ENCODE measurements at regions of chr5 and their contacts with region 1.

Region 1: GRCh38 chr5:10627160-10627701 is 63.4 kb downstream of the ANKRD33B start:
- DNase-seq: no peak
- H3K4me3 ChIP-seq: no peak overlapping the region
- H3K27ac ChIP-seq: no peak overlapping the region
- H3K4me1 ChIP-seq: peaks cover 0 to 5% of the 10 kb centered on the region in 2 donors
- H3K27me3 ChIP-seq: no peaks in the 10 kb centered on the region
- CTCF ChIP-seq: no peak
- POLR2A ChIP-seq: no peak

Region 2: GRCh38 chr5:10441083-10441991 is 185.9 kb before region 1 on chr5 and contains the start of gene ROPN1L:
- intact Hi-C with region 1: no loop called
- DNase-seq: peak; percentile 80 to 84
- H3K4me3 ChIP-seq: peak within 1 kb of the TSS; percentile 10 to 41 (median 17)
- H3K27ac ChIP-seq: peak within 1 kb of the TSS in 2 of 3 donors; percentile 39 to 60
- H3K4me1 ChIP-seq: peaks cover 4 to 7% of the 10 kb centered on the region in 2 donors
- H3K27me3 ChIP-seq: no peaks in the 10 kb centered on the region
- CTCF ChIP-seq: no peak
- POLR2A ChIP-seq: peak in 1 of 2 donors; percentile 86
- total RNA-seq, gene ROPN1L: 2.0 to 3.0 (median 2.1) TPM in 3 of 4 donors, not detected in the other

Region 3: GRCh38 chr5:10452768-10453331 is 174.4 kb before region 1 on chr5:
- intact Hi-C with region 1: loop called (anchors 5 kb)
- DNase-seq: peak in 1 of 2 donors; percentile 20
- H3K4me3 ChIP-seq: no peak overlapping the region
- H3K27ac ChIP-seq: no peak overlapping the region
- H3K4me1 ChIP-seq: peaks cover 0 to 21% of the 10 kb centered on the region in 2 donors
- H3K27me3 ChIP-seq: no peaks in the 10 kb centered on the region
- CTCF ChIP-seq: peak; percentile 12 to 96 (median 70)
- POLR2A ChIP-seq: no peak